Right ventricle myocardium superior (tissue), 1 donor: ENCODE measurements at regions of chr17 and their contacts with region 1.

Region 1: GRCh38 chr17:14300575-14301278 is at the start of gene HS3ST3B1:
- DNase-seq: peak; percentile 98
- ATAC-seq: peak; percentile 87
- total RNA-seq, gene HS3ST3B1: 1.5 TPM

Region 2: DNA sequence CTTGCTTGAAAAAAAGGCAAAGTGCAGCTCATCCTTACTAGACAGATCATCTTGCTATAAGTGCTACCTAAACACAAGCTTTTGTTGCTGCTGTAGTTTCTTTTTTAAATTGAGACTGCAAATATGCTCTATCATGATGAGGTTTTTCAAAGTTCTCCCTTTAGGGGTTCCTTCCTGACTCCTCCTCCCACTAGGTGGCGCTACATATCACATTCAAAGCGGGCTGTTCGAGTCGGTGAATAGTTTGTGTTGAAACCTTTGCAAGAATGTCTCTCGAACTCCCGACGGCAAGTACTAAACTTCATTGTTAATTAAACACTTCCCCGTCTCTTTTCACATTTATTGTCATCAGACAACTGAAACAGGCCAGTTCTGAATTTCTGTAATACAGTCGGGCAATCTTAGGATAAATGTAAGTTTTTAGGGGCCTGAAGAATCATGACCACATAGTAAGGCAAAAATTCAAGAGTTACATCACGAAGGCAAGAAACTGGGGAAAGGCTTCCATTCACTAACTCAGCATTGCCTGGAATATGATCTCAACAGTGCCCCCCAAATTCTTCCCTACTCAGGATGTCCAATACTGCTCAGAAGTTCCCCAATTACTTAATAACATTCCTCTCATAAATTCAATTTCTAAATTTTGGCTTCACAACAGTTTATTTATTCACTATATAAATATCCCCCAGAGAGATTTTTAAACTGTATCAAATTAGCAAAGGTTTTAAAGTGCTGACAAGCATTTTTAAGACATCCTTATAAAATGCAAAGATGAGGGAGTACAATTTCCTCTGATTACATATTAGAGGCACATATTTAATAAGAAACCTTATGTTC is 705.7 kb before region 1 on chr17:
- intact Hi-C with region 1: loop called (anchors 2 kb)
- DNase-seq: no peak
- ATAC-seq: peak; percentile 91

Region 3: GRCh38 chr17:14069251-14070021 is 231.3 kb before region 1 on chr17 and contains the start of gene COX10:
- intact Hi-C with region 1: loop called (anchors 5 kb)
- DNase-seq: peak; percentile 93
- ATAC-seq: peak; percentile 99
- total RNA-seq, gene COX10: 39.4 TPM